Cardiac septum (tissue), 1 donor: ENCODE measurements at regions of chr20 and their contacts with region 1.

Region 1: DNA sequence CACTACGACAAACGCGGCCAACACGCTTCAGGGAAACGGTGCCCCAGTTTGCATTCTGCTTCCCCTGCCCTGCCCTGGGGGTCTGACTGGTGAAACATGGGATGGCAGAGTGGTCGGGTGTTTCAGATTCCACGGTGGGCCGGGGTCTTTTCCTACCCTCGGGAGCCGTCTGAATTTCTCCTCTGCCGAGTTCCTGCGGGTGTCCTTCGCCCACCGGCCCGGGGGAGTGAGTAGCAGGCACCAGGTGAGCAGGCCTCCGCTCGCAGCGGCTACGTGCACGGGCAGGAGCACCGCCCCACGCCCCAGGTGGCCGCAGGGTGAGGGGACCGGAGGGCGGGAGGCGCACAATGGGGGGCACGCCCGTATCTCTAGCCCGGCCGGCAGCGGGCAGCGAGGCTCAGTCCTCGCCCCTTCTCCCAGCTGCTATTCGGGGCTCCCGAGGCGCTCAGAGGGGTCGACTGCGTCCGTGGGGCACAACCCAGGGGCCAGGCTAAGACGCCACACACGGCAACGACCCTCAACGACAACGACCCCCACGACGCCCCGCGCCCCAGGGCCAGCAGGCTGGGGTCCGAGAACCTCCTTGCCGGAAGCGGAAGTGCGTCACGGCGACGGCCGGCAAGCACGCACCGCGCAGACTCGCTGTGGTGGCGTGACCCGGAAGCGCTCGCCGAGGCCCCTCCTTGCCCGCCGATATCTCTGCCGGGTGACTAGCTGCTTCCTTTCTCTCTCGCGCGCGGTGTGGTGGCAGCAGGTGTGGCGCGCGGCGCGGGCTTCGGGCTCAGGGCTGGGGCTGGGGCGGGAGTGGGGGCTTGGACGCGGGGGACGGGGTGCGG is at the start of gene RPS21:
- DNase-seq: peak; percentile 96
- total RNA-seq, gene RPS21: 466 TPM

Region 2: GRCh38 chr20:62025832-62026563 is 360.6 kb before region 1 on chr20:
- intact Hi-C with region 1: loop called (anchors 10 kb)
- DNase-seq: no peak

Region 3: DNA sequence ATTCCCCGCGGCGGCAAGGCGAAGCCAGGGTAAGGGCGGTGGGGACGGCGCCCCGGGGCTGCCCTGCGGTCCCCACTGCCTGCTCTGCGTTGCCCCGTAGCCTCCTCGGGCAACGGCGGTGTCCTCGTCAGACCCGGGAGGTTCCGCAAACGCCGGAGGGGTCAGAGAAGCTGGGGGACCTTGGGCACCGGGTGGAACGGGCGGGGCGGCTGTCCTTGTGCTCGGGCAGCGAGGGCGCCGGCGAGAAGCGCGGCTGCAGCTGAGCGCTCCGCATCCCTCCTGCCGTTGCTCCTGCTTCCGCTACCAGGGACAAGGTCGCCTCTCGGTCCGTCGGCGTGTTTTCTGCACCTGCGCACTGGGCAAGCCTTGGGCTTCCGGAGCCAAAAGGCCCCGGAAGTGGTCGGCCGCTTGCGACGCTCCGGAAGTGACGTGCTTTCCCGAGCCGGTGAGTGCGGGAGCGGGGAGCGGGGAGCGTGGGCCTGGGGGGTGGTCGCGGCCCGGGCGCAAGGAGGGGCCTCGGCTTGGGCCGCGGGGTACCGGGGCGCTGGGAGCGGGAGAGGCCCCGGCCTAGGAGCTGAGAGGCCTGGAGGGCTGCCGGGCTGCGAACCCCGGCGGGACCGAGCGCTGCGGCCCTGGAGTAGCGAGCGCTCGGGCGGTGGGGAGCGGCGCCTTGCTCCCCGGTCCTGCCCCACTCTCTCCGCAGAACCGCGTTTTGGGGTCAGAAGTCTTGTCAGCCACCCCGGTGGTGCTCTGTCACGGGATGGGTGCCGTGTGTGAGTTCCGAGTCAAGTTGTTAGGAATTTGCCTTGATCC is 203.8 kb before region 1 on chr20 and contains the start of gene MTG2:
- intact Hi-C with region 1: loop called (anchors 5 kb)
- DNase-seq: peak; percentile 98
- total RNA-seq, gene MTG2: 26.6 TPM

Region 4: GRCh38 chr20:62302341-62303058 is 84.1 kb before region 1 on chr20 and contains the start of gene ADRM1:
- intact Hi-C with region 1: loop called (anchors 1 kb)
- DNase-seq: peak; percentile 98
- total RNA-seq, gene ADRM1: 79.9 TPM